Mammary epithelial cell (primary cell): ENCODE measurements at regions of chr3 and their contacts with region 1.

Region 1: GRCh38 chr3:53821631-53822121 is 24.5 kb downstream of the CHDH start:
- DNase-seq: peak; percentile 87
- H3K4me3 ChIP-seq: no peak overlapping the region
- H3K27ac ChIP-seq: no peak overlapping the region
- H3K4me1 ChIP-seq: no peaks in the 10 kb centered on the region
- H3K27me3 ChIP-seq: no peaks in the 10 kb centered on the region
- CTCF ChIP-seq: peak in 1 of 2 donors; percentile 16

Region 2: GRCh38 chr3:53729618-53730017 is 92.1 kb before region 1 on chr3:
- CTCF ChIA-PET with region 1: no interaction called
- dilution Hi-C with region 1: no loop called
- in situ Hi-C with region 1: no loop called
- intact Hi-C with region 1: loop called (anchors 10 kb)
- DNase-seq: peak; percentile 5
- H3K4me3 ChIP-seq: no peak overlapping the region
- H3K27ac ChIP-seq: no peak overlapping the region
- H3K4me1 ChIP-seq: no peaks in the 10 kb centered on the region
- H3K27me3 ChIP-seq: no peaks in the 10 kb centered on the region
- CTCF ChIP-seq: peak; percentile 13 to 42

Region 3: DNA sequence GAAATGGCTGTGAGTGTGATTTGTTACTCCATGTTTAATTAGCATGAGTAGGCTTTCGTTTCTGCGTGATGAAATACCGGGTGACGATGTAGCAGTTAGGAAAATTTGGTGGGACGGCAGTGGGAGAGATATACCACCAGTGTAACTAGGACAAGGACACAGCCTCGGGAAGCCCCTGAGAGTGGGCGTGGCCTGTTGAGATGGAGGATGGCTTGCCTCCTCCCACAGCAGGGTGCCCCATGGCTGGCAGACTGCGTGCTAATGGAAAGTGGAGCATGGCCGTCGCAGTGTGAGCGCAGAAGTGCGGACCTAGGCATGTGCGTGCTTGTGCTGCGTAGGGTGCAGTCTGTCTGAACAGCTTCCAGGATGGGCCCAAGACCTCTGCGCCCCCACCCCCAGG is 32.3 kb before region 1 on chr3:
- CTCF ChIA-PET with region 1: no interaction called
- dilution Hi-C with region 1: loop called (anchors 5 kb)
- in situ Hi-C with region 1: no loop called
- intact Hi-C with region 1: no loop called
- DNase-seq: no peak
- H3K4me3 ChIP-seq: no peak overlapping the region
- H3K27ac ChIP-seq: no peak overlapping the region
- H3K4me1 ChIP-seq: peaks cover 4% of the 10 kb centered on the region
- H3K27me3 ChIP-seq: no peaks in the 10 kb centered on the region
- CTCF ChIP-seq: no peak